Panc1 (cell line): ENCODE measurements at regions of chr20 and their contacts with region 1.

Region 1: GRCh38 chr20:18632196-18633009 is 44.5 kb downstream of the DTD1 start:
- DNase-seq: no peak
- ATAC-seq: peak; percentile 97
- H3K4me3 ChIP-seq: no peak overlapping the region
- H3K27ac ChIP-seq: no peak overlapping the region
- H3K4me1 ChIP-seq: no peaks in the 10 kb centered on the region
- H3K27me3 ChIP-seq: no peaks in the 10 kb centered on the region
- CTCF ChIP-seq: peak; percentile 96

Region 2: DNA sequence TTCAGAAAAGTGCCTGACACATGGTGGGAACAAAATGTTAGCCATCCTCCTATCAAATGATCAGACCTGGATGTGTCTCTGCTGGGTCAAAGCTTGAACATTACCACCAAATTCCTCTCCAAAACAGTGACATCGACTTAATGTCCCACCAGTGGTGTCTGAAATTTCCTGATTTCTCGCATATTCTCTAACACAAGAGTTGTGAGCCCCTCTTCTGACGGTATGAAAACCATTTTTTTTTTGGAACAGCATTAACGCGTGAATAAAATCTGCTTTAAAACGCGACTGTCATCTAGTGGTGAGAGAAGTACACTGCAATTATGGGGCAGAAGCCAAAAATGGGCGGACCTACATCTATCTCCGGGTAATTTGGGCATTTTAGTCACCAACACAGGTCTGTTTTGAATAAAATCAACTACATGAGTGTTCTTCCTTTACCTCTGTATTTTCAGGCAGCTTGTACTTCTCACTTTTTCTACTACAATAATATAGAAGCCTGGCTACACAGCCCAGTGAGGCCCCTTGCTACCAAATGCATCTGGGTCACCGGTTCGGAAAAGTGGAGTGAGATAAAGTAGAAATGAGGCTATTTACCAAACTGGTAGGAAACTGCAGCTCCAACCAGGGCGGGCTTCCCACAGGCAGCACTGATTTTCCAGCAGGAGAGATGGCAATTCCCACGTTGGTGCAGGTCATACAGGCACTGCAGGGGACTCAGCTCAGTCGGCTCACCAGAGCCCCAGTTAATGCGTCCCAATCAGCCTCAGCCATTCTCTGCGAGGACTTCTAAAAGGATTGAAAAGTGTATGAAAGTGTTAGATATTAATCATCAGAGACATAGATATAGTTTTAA is 636.2 kb before region 1 on chr20:
- CTCF ChIA-PET with region 1: no interaction called
- POLR2A ChIA-PET with region 1: no interaction called
- in situ Hi-C with region 1: no loop called
- intact Hi-C with region 1: no loop called
- DNase-seq: no peak
- ATAC-seq: peak; percentile 80
- H3K4me3 ChIP-seq: peak overlapping the region in 1 of 2 experiments; percentile 31; a peak in 2 of 4 replicates
- H3K27ac ChIP-seq: no peak overlapping the region
- H3K4me1 ChIP-seq: no peaks in the 10 kb centered on the region; the same call in 1 of the 2 replicates
- H3K27me3 ChIP-seq: no peaks in the 10 kb centered on the region
- CTCF ChIP-seq: peak; percentile 98

Region 3: DNA sequence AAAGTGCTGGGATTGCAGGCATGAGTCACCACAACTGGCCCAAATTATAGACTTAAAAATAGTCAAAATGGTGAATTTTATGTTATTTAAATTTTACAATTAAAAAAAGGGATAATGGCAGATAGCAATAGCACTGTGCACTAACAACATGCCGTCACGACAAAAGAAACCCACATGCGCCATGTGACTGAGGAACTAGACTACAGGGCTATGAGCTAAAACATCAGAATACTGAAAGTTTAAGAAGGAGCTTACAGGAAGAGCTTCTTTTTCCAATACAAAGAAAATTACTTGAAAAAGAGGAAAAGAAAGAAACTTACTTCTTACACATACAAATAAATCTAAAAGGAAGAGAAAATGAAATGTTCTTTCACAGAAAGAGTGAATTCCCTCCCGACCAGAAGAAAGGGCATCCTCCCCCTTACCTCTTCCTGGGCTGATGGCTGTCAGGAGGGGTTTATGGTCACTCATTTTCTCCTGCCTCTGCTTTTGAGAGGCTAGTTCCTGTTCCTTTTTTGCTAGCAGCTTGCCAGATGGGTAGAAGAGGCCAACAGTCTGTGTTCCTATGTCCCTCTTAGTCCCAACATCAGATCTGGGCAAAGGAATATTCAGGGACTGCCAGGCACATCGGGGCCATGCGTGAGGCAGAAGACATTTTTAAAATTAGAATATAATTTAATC is 220.0 kb before region 1 on chr20:
- CTCF ChIA-PET with region 1: no interaction called
- POLR2A ChIA-PET with region 1: no interaction called
- in situ Hi-C with region 1: no loop called
- intact Hi-C with region 1: loop called (anchors 5 kb)
- DNase-seq: no peak
- ATAC-seq: no peak
- H3K4me3 ChIP-seq: no peak overlapping the region
- H3K27ac ChIP-seq: no peak overlapping the region
- H3K4me1 ChIP-seq: no peaks in the 10 kb centered on the region
- H3K27me3 ChIP-seq: no peaks in the 10 kb centered on the region
- CTCF ChIP-seq: no peak

Region 4: DNA sequence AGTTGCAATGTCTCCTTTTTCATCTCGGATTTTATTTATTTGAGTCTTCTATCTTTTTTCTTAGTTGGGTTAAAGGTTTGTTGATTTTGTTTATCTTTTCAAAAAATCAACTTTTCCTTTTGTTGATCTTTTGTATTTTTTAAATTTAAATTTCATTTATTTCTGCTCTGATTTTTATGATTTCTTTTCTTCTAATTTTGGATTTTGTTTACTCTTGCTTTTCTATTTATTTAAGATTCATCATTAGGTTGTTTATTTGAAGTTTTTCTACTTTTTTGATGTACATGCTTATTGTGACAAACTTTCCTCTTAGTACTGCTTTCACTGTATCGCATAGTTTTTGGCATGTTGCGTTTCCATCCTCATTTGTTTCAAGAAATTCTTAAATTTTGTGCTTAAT is 139.0 kb after region 1 on chr20:
- CTCF ChIA-PET with region 1: interaction called, 12 read pairs
- POLR2A ChIA-PET with region 1: no interaction called
- in situ Hi-C with region 1: no loop called
- intact Hi-C with region 1: no loop called
- DNase-seq: no peak
- ATAC-seq: no peak
- H3K4me3 ChIP-seq: no peak overlapping the region
- H3K27ac ChIP-seq: no peak overlapping the region
- H3K4me1 ChIP-seq: no peaks in the 10 kb centered on the region
- H3K27me3 ChIP-seq: peaks cover 2% of the 10 kb centered on the region; the same call in 1 of the 2 replicates
- CTCF ChIP-seq: no peak

Region 5: GRCh38 chr20:18904624-18905023 is 272.2 kb after region 1 on chr20:
- CTCF ChIA-PET with region 1: interaction called, 3 read pairs
- POLR2A ChIA-PET with region 1: no interaction called
- in situ Hi-C with region 1: no loop called
- intact Hi-C with region 1: loop called (anchors 10 kb)
- DNase-seq: peak; percentile 1
- ATAC-seq: no peak
- H3K4me3 ChIP-seq: no peak overlapping the region
- H3K27ac ChIP-seq: no peak overlapping the region
- H3K4me1 ChIP-seq: no peaks in the 10 kb centered on the region
- H3K27me3 ChIP-seq: no peaks in the 10 kb centered on the region
- CTCF ChIP-seq: peak; percentile 38; the same call in 1 of the 2 replicates